CD4-positive, alpha-beta T cell (primary cell): ENCODE measurements at regions of chr19 and their contacts with region 1.

Region 1: GRCh38 chr19:37077934-37078725 is at the start of gene ZNF420:
- DNase-seq: peak; percentile 75 to 95 (median 84)
- ATAC-seq: peak; percentile 95
- H3K4me3 ChIP-seq: peak within 1 kb of the TSS; percentile 99
- H3K4me3 Mint-ChIP-seq: peak within 1 kb of the TSS; percentile 98
- H3K27ac ChIP-seq: peak within 1 kb of the TSS; percentile 65 to 72
- H3K27ac Mint-ChIP-seq: peak within 1 kb of the TSS; percentile 91
- H3K4me1 ChIP-seq: peaks cover 25% of the 10 kb centered on the region
- H3K4me1 Mint-ChIP-seq: peaks cover 30% of the 10 kb centered on the region
- H3K27me3 ChIP-seq: no peaks in the 10 kb centered on the region
- H3K27me3 Mint-ChIP-seq: no peaks in the 10 kb centered on the region
- CTCF ChIP-seq: no peak
- total RNA-seq, gene ZNF420: 3.7 to 4.5 TPM

Region 2: GRCh38 chr19:36489118-36489919 is 588.8 kb before region 1 on chr19 and contains the start of gene ZNF566:
- CTCF ChIA-PET with region 1: no interaction called
- POLR2A ChIA-PET with region 1: interaction called, 15 read pairs
- intact Hi-C with region 1: loop called in 1 of 2 experiments (anchors 2 kb)
- DNase-seq: peak; percentile 84 to 97 (median 89)
- ATAC-seq: peak; percentile 90
- H3K4me3 ChIP-seq: peak within 1 kb of the TSS; percentile 64
- H3K4me3 Mint-ChIP-seq: peak within 1 kb of the TSS; percentile 97
- H3K27ac ChIP-seq: peak within 1 kb of the TSS; percentile 84 to 87
- H3K27ac Mint-ChIP-seq: peak within 1 kb of the TSS; percentile 99
- H3K4me1 ChIP-seq: peaks cover 19% of the 10 kb centered on the region
- H3K4me1 Mint-ChIP-seq: peaks cover 36% of the 10 kb centered on the region
- H3K27me3 ChIP-seq: no peaks in the 10 kb centered on the region
- H3K27me3 Mint-ChIP-seq: no peaks in the 10 kb centered on the region
- CTCF ChIP-seq: no peak
- total RNA-seq, gene ZNF566: 6.3 to 6.8 TPM

Region 3: DNA sequence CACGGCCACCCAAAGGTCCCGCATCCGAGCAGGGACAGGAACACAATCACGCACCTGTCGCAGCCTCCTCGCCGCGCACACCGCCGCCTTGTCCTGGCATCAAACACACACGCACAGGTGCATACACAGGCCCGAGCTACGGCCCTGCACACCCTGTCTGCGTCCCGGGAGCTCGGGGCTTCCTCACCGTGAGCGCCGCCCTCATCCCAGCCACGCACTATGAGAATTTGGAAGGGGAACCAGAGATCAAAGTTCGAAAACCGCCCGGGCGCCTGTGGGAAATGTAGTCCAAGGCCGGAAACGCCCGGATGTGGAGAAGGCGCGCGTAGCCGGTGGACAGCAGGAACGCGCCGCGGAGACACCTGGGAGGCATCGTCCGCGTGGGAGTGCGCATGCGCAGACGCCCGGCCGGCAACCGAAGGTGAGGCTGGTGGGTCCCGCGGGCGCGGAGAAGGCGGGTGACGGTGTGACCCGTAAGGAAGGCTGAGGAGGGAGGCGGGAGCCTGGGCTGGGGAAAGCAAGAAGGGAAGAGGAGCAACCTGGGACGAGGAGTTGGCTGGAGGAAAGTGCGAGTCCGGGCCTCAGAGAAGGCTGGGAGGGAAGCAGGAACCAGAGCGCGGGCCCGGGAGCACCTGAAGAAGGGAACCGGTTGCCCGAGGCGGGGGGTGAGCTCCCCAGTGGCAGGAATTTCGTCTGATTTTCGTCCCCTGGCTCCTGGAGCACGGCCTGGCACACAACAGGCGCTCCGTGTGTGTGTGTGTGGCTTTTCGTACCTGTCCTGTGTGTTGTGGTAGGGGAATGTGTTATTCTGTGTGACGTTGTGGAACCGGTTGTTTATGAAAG is 390.7 kb before region 1 on chr19 and contains the start of gene ZNF567:
- CTCF ChIA-PET with region 1: no interaction called
- POLR2A ChIA-PET with region 1: no interaction called
- intact Hi-C with region 1: loop called in 1 of 2 experiments (anchors 2 kb)
- DNase-seq: peak; percentile 94 to 99 (median 97)
- ATAC-seq: peak; percentile 93
- H3K4me3 ChIP-seq: peak within 1 kb of the TSS; percentile 67
- H3K4me3 Mint-ChIP-seq: peak within 1 kb of the TSS; percentile 99
- H3K27ac ChIP-seq: peak within 1 kb of the TSS; percentile 47 to 56
- H3K27ac Mint-ChIP-seq: peak within 1 kb of the TSS; percentile 97
- H3K4me1 ChIP-seq: peaks cover 23% of the 10 kb centered on the region
- H3K4me1 Mint-ChIP-seq: peaks cover 40% of the 10 kb centered on the region
- H3K27me3 ChIP-seq: no peaks in the 10 kb centered on the region
- H3K27me3 Mint-ChIP-seq: no peaks in the 10 kb centered on the region
- CTCF ChIP-seq: no peak
- total RNA-seq, gene ZNF567: 7.3 to 7.6 TPM

Region 4: DNA sequence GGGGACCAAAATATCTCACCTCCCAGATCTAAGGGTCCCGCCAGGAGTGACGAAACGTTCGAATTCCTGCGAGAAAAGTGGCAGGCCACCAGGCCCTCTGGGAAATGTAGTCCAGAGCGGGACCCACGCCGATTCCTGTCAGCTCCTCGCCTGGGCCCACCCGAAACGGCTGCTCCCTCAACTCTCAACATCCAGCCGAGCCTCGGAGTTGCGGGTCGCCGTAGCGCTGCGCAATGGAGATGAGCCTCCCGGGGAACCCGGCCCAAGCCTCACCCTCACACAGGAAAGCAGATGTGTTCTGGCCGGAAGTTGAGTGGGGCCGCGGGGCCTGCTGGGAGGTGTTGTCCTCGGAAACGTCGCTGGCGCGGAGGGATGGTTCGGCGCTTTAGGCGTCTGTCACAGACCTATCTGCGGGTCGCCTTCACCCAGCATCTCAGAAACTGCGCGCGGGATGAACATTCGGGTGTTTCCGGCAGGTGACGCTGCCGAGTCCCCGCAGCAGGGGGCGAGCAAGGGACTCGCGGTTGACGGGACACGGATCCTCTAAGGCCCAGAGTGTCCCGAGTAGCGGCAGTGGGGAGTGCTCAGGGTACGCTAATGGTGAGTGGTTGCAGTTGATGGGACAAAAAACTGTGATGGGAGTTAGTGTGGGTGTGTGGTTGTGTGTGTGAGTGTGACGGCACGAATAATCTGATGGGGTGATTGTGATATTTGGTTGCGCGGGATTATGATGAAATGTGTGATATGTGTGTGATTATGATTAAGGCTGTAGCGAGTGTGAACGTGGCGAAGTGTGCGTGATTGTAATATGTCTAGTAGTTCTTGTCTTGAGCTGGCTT is 161.9 kb before region 1 on chr19 and contains the starts of genes ZNF568 and ZNF829:
- CTCF ChIA-PET with region 1: interaction called, 4 read pairs
- POLR2A ChIA-PET with region 1: interaction called, 7 read pairs
- intact Hi-C with region 1: loop called (anchors 2 to 5 kb)
- DNase-seq: peak; percentile 83 to 97 (median 90)
- ATAC-seq: peak; percentile 97
- H3K4me3 ChIP-seq: peak within 1 kb of the TSS; percentile 92
- H3K4me3 Mint-ChIP-seq: peak within 1 kb of the TSS; percentile 90
- H3K27ac ChIP-seq: peak within 1 kb of the TSS; percentile 89 to 97
- H3K27ac Mint-ChIP-seq: peak within 1 kb of the TSS; percentile 88
- H3K4me1 ChIP-seq: peaks cover 19% of the 10 kb centered on the region
- H3K4me1 Mint-ChIP-seq: peaks cover 44% of the 10 kb centered on the region
- H3K27me3 ChIP-seq: no peaks in the 10 kb centered on the region
- H3K27me3 Mint-ChIP-seq: no peaks in the 10 kb centered on the region
- CTCF ChIP-seq: peak; percentile 74
- total RNA-seq, gene ZNF568: 3.0 to 4.2 TPM
- total RNA-seq, gene ZNF829: 3.8 to 4.4 TPM

Region 5: GRCh38 chr19:37172368-37173366 is 94.5 kb after region 1 on chr19 and contains the start of gene ZNF585A:
- CTCF ChIA-PET with region 1: no interaction called
- POLR2A ChIA-PET with region 1: interaction called, 3 read pairs
- intact Hi-C with region 1: loop called (anchors 1 to 2 kb)
- DNase-seq: peak; percentile 83 to 98 (median 89)
- ATAC-seq: peak; percentile 99
- H3K4me3 ChIP-seq: peak within 1 kb of the TSS; percentile 77
- H3K4me3 Mint-ChIP-seq: no peak within 1 kb of the TSS
- H3K27ac ChIP-seq: peak within 1 kb of the TSS; percentile 63 to 73
- H3K27ac Mint-ChIP-seq: no peak within 1 kb of the TSS
- H3K4me1 ChIP-seq: peaks cover 11% of the 10 kb centered on the region
- H3K4me1 Mint-ChIP-seq: no peaks in the 10 kb centered on the region
- H3K27me3 ChIP-seq: no peaks in the 10 kb centered on the region
- H3K27me3 Mint-ChIP-seq: no peaks in the 10 kb centered on the region
- CTCF ChIP-seq: no peak
- total RNA-seq, gene ZNF585A: 4.5 to 4.6 TPM

Region 6: DNA sequence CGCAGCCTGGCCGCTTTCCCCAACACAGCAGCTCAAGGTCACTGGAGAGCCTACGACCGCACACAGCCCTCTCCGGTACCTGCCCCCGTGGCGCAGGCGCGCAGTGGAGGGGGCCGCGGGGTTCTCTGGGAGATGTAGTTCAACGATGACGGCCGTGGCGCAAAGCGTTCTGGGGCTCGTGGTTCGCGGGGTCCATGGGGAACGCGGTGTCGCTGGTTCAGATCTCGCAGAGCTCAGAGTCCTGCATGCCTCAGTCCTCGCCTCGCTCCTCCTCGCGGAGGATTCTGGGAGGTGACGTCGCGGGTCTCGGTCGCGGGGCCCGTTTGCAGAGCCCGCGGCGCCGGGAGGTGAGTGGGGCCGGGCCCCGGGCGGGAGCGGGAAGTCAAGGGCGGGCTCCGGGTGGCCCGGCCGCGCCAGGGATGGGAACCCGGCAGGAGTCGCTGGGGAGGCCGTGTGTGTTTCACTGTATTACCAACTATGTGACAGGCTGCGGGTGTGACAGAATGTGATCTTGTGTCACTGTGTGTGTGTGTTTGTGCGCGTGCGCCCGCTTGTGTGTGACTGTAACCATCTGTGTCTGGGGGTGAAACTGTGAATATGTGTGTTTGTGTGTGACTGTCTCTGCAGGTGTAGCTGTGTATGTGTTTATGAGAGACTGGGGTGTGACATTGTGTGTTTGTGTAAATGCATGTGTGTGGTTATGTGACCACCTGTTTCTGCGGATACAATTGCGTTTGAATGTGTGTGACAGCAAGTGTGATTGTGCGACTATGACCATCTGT is 292.9 kb after region 1 on chr19 and contains the start of gene ZNF527:
- CTCF ChIA-PET with region 1: no interaction called
- POLR2A ChIA-PET with region 1: interaction called, 8 read pairs
- intact Hi-C with region 1: loop called in 1 of 2 experiments (anchors 2 kb)
- DNase-seq: peak; percentile 93 to 98 (median 96)
- ATAC-seq: peak; percentile 96
- H3K4me3 ChIP-seq: peak within 1 kb of the TSS; percentile 59
- H3K4me3 Mint-ChIP-seq: peak within 1 kb of the TSS; percentile 96
- H3K27ac ChIP-seq: peak within 1 kb of the TSS; percentile 76 to 85
- H3K27ac Mint-ChIP-seq: peak within 1 kb of the TSS; percentile 96
- H3K4me1 ChIP-seq: peaks cover 17% of the 10 kb centered on the region
- H3K4me1 Mint-ChIP-seq: peaks cover 16% of the 10 kb centered on the region
- H3K27me3 ChIP-seq: no peaks in the 10 kb centered on the region
- H3K27me3 Mint-ChIP-seq: no peaks in the 10 kb centered on the region
- CTCF ChIP-seq: no peak
- total RNA-seq, gene ZNF527: 7.8 to 8.4 TPM

Region 7: DNA sequence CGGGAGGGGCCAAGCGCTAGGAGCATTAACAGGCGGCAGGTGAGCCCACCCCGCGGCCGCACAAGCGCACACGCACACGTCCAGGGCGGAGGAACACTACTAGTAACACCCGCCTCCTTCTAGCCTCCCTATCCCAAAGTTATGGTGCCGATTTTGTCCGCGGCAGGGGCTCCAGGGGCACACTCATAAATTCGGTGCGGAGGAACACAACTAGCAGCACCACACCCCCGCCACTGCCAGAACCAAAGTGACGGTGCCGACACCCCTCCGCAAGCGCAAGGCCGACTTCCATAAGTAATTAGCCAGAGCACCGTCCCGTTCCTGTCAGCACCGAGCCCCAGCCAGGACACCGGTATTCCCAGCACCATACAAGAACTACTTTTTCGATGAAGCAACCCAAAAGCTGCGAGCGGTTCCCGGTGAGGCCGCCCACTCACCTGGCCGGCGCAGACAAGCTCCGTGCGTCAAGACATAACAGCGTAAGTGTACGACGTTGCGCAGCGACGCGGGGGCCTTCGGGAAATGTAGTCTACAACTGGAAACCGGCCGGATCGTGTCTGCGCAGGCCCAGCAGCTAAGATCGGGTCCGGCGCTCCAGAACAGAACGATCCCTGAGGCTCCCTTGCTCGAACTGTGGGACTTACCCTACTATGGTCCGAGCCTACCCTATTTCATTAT is 516.3 kb after region 1 on chr19 and contains the starts of genes ZNF540 and ZNF571:
- CTCF ChIA-PET with region 1: no interaction called
- POLR2A ChIA-PET with region 1: interaction called, 6 read pairs
- intact Hi-C with region 1: loop called in 1 of 2 experiments (anchors 10 kb)
- DNase-seq: peak; percentile 86 to 96 (median 91)
- ATAC-seq: peak; percentile 95
- H3K4me3 ChIP-seq: peak within 1 kb of the TSS; percentile 93
- H3K4me3 Mint-ChIP-seq: peak within 1 kb of the TSS; percentile 97
- H3K27ac ChIP-seq: peak within 1 kb of the TSS; percentile 94 to 97
- H3K27ac Mint-ChIP-seq: peak within 1 kb of the TSS; percentile 98
- H3K4me1 ChIP-seq: peaks cover 15% of the 10 kb centered on the region
- H3K4me1 Mint-ChIP-seq: peaks cover 39% of the 10 kb centered on the region
- H3K27me3 ChIP-seq: no peaks in the 10 kb centered on the region
- H3K27me3 Mint-ChIP-seq: no peaks in the 10 kb centered on the region
- CTCF ChIP-seq: no peak
- total RNA-seq, gene ZNF540: 11.6 to 12.0 TPM
- total RNA-seq, gene ZNF571: 6.7 to 7.0 TPM